Dorsolateral prefrontal cortex (tissue), 120 donors: ENCODE measurements at regions of chr3 and their contacts with region 1.

Region 1: GRCh38 chr3:107753480-107753879 is 230.7 kb downstream of the BBX start:
- DNase-seq: peak in 9 of 10 donors; percentile 15 to 74 (median 54)
- H3K4me3 ChIP-seq: no peak overlapping the region
- H3K27ac ChIP-seq: peak overlapping the region in 21 of 59 donors; percentile 2 to 87 (median 38)
- H3K27me3 ChIP-seq: no peaks in the 10 kb centered on the region
- CTCF ChIP-seq: peak; percentile 48 to 88 (median 74)

Region 2: GRCh38 chr3:107198581-107199181 is 554.8 kb before region 1 on chr3:
- intact Hi-C with region 1: no loop called
- DNase-seq: peak in 6 of 10 donors; percentile 44 to 50 (median 46)
- H3K4me3 ChIP-seq: peak overlapping the region in 32 of 59 donors; percentile 0 to 49 (median 14)
- H3K27ac ChIP-seq: peak overlapping the region in 55 of 59 donors; percentile 3 to 87 (median 69)
- H3K27me3 ChIP-seq: no peaks in the 10 kb centered on the region
- CTCF ChIP-seq: peak in 2 of 56 donors; percentile 9

Region 3: GRCh38 chr3:107794664-107795443 is 41.4 kb after region 1 on chr3:
- intact Hi-C with region 1: loop called (anchors 5 kb)
- DNase-seq: no peak
- H3K4me3 ChIP-seq: no peak overlapping the region
- H3K27ac ChIP-seq: peak overlapping the region in 22 of 59 donors; percentile 0 to 67 (median 38)
- H3K27me3 ChIP-seq: no peaks in the 10 kb centered on the region
- CTCF ChIP-seq: peak in 49 of 56 donors; percentile 12 to 69 (median 43)

Region 4: DNA sequence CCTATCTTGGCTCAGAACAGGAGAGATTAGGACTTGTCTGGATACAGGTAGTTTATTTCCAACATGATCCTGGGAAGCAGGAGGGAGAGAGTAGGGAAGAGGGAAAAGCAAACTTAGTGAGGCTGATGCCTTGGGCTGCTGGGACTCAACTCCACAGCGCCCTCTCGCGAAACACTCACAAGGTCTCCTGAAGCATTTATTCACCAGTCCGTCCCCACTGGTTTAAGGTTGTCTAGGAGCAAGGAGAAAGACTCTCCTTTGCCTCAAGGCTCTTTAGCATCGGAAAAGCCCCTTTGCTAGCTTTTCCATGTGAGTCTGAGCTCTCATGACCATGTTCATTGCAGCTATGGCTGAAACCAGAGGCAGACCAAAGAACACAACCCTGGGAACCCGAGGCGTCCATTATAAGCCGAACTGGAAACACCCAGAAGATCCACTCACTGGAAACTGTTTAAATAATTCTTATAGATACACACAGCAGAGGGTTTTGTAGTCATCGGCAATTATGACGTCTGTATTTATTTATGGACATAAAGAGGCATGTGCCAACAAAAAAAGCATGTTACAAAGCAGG is 92.9 kb after region 1 on chr3:
- intact Hi-C with region 1: loop called (anchors 5 kb)
- DNase-seq: peak in 9 of 10 donors; percentile 42 to 79 (median 68)
- H3K4me3 ChIP-seq: no peak overlapping the region
- H3K27ac ChIP-seq: peak overlapping the region in 36 of 59 donors; percentile 0 to 75 (median 46)
- H3K27me3 ChIP-seq: no peaks in the 10 kb centered on the region
- CTCF ChIP-seq: peak in 55 of 56 donors; percentile 23 to 76 (median 59)